Lower leg skin (tissue), 4 donors: ENCODE measurements at regions of chr17 and their contacts with region 1.

Region 1: GRCh38 chr17:72560303-72561247 is 439.8 kb downstream of the SOX9 start:
- DNase-seq: no peak
- H3K4me3 ChIP-seq: no peak overlapping the region
- CTCF ChIP-seq: no peak
- POLR2A ChIP-seq: no peak

Region 2: DNA sequence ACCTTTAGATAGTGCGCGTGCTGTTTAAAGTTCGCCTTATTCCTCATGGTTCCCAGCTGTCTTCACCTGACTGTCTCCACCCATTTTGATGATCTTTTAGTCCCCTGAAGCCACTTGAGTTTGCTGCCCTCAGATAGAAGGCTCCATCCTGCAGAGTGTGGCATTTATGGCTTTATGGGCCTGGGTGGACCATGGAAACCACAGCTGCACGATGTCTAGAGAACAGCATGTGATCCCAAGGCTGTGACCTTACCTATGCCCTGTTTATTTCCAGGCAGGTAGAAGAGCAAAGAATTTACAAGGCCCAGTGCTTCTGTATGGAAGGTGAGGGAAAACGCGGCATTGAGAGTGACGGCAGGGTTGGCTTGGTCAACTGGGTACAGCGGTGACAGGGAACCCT is 175.0 kb after region 1 on chr17:
- intact Hi-C with region 1: no loop called
- DNase-seq: no peak
- H3K4me3 ChIP-seq: no peak overlapping the region
- CTCF ChIP-seq: no peak
- POLR2A ChIP-seq: no peak

Region 3: DNA sequence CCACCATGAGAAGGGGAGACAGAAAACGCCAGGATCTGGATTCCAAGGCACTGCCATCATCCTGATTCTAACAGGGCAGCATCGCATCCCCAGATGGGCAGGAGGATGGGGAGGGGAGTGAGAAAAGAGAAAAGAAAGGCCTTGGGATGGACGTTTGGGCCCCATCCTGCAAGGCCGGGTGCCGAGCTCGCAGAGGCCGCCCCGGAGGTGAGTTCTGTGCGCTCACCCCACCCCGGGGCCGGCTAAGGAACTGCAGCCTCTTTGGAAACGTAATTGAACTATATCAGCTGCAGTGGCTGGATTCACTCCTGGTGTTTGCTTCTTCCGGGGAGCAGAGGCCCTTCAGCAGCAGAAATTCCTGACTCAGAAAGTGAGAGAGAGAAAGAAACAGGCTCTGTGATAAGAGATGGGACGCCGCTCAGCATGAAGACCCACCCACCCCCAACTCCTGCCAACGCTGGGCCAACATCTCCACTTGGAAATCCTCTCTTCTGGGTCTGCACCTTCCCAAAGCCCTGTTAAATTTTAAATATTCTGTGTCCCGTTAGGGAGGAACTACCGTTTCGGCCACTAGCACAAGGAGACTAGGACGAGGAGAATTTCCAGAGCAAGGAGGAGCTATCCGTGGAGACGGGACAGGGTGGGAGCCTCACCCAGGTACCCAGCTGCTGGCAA is 595.7 kb after region 1 on chr17:
- intact Hi-C with region 1: loop called (anchors 10 kb)
- DNase-seq: peak; percentile 50 to 93
- H3K4me3 ChIP-seq: no peak overlapping the region
- CTCF ChIP-seq: peak in 1 of 3 donors; percentile 82
- POLR2A ChIP-seq: no peak